T-cell (primary cell): ENCODE measurements at regions of chr17 and their contacts with region 1.

Region 1: DNA sequence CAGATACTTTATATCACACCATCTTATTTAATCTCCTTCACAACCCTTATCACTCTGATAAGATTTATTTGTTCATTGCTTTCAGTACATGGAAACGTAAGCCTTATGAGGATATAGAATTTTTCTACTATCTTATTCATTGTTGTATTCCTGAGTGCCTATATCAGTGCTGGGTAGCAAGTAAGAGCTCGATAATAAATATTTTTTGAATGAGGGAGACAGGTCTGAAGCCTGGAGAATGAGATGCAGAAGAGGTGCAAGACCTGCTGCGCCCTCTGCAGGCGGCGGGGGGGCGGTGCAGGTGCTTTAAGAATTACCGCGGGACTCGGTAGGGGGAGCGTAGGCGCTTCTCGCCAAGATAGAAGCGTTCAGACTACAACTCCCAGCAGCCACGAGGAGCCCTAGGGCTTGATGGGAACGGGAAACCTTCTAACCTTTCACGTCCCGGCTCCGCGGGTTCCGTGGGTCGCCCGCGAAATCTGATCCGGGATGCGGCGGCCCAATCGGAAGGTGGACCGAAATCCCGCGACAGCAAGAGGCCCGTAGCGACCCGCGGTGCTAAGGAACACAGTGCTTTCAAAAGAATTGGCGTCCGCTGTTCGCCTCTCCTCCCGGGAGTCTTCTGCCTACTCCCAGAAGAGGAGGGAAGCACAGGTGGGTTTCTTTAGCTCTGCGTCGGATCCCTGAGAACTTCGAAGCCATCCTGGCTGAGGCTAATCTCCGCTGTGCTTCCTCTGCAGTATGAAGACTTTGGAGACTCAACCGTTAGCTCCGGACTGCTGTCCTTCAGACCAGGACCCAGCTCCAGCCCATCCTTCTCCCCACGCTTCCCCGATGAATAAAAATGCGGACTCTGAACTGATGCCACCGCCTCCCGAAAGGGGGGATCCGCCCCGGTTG is at the start of gene WRAP53:
- DNase-seq: peak; percentile 91 to 97 (median 94)
- ATAC-seq: peak; percentile 78 to 82 (median 81)
- H3K4me3 ChIP-seq: peak within 1 kb of the TSS; percentile 89 to 99
- H3K4me3 Mint-ChIP-seq: peak within 1 kb of the TSS; percentile 85 to 99 (median 96)
- H3K27ac ChIP-seq: peak within 1 kb of the TSS; percentile 98
- H3K27ac Mint-ChIP-seq: peak within 1 kb of the TSS; percentile 100
- H3K4me1 ChIP-seq: peaks cover 17 to 33% of the 10 kb centered on the region in 2 experiments
- H3K4me1 Mint-ChIP-seq: peaks cover 39 to 52% (median 48%) of the 10 kb centered on the region in 3 donors
- H3K27me3 ChIP-seq: no peaks in the 10 kb centered on the region
- H3K27me3 Mint-ChIP-seq: no peaks in the 10 kb centered on the region
- total RNA-seq, gene WRAP53: 8.0 to 14.6 (median 13.1) TPM

Region 2: GRCh38 chr17:6940186-6940649 is 747.9 kb before region 1 on chr17:
- CTCF ChIA-PET with region 1: interaction called in 1 of 2 experiments, 10 read pairs
- POLR2A ChIA-PET with region 1: no interaction called
- DNase-seq: peak in 3 of 35 experiments; percentile 3 to 11 (median 6)
- ATAC-seq: peak in 3 of 4 experiments; percentile 46 to 57 (median 52)
- H3K4me3 ChIP-seq: peak overlapping the region in 1 of 2 donors; percentile 37
- H3K4me3 Mint-ChIP-seq: peak overlapping the region; percentile 45 to 69 (median 57)
- H3K27ac ChIP-seq: no peak overlapping the region
- H3K27ac Mint-ChIP-seq: no peak overlapping the region
- H3K4me1 ChIP-seq: peaks cover 4 to 5% of the 10 kb centered on the region in 2 experiments
- H3K4me1 Mint-ChIP-seq: peaks cover 11 to 15% (median 11%) of the 10 kb centered on the region in 3 donors
- H3K27me3 ChIP-seq: no peaks in the 10 kb centered on the region
- H3K27me3 Mint-ChIP-seq: no peaks in the 10 kb centered on the region

Region 3: GRCh38 chr17:7194056-7194455 is 494.1 kb before region 1 on chr17:
- CTCF ChIA-PET with region 1: no interaction called
- POLR2A ChIA-PET with region 1: no interaction called
- DNase-seq: no peak
- ATAC-seq: no peak
- H3K4me3 ChIP-seq: no peak overlapping the region
- H3K4me3 Mint-ChIP-seq: no peak overlapping the region
- H3K27ac ChIP-seq: no peak overlapping the region
- H3K27ac Mint-ChIP-seq: no peak overlapping the region
- H3K4me1 ChIP-seq: no peaks in the 10 kb centered on the region
- H3K4me1 Mint-ChIP-seq: no peaks in the 10 kb centered on the region
- H3K27me3 ChIP-seq: no peaks in the 10 kb centered on the region
- H3K27me3 Mint-ChIP-seq: no peaks in the 10 kb centered on the region

Region 4: GRCh38 chr17:7435221-7435675 is 252.9 kb before region 1 on chr17 and contains the start of gene TMEM102:
- CTCF ChIA-PET with region 1: interaction called in 1 of 2 experiments, 26 read pairs
- POLR2A ChIA-PET with region 1: interaction called in 1 of 2 experiments, 5 read pairs
- DNase-seq: peak; percentile 95 to 99 (median 97)
- ATAC-seq: peak; percentile 82 to 87 (median 84)
- H3K4me3 ChIP-seq: peak within 1 kb of the TSS; percentile 78 to 86
- H3K4me3 Mint-ChIP-seq: peak within 1 kb of the TSS; percentile 92 to 96 (median 93)
- H3K27ac ChIP-seq: peak within 1 kb of the TSS; percentile 83
- H3K27ac Mint-ChIP-seq: peak within 1 kb of the TSS; percentile 95 to 96
- H3K4me1 ChIP-seq: peaks cover 13 to 51% of the 10 kb centered on the region in 2 experiments
- H3K4me1 Mint-ChIP-seq: peaks cover 35 to 43% (median 37%) of the 10 kb centered on the region in 3 donors
- H3K27me3 ChIP-seq: peaks cover 0 to 28% of the 10 kb centered on the region in 2 experiments
- H3K27me3 Mint-ChIP-seq: peaks cover 11 to 13% of the 10 kb centered on the region in 2 donors
- total RNA-seq, gene TMEM102: 8.8 to 26.9 (median 23.5) TPM

Region 5: DNA sequence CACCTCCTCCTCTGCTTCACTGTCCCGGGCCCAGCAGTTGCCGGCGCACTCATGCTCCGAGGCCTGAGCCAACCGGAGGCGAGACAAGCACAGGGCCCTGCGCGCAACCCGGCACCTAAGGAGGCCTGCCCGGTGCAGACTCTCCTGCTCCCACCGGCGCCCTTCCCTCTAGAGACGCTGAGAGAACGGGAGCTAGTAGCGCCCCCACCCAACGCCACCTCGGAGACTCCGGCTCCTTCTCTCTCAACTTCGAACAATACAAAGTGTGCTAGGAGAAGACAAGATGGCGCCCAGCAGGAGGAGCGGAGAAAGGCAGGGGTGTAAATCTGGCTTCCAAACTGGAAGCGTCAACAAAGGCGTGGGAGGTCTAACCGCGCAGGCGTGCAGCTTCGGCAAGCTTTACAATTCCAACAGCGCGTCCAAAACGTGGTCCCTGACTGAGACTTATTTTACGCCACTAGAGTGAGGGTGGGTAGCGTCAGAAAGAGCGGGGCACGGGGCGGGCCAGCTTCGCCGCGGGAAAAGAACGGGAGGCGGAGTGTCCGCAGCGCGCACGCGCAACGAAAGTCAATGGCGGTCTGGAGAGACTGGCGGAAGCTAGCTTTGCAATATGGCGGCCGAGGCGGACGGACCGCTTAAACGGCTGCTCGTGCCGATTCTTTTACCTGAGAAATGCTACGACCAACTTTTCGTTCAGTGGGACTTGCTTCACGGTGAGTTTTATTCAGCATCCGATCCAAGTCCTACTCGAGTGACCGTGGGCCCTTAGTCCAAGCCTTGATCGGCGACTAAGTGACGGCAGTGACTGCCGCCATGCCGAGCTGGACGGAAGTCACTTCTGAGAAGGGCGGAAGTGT is 104.7 kb before region 1 on chr17 and contains the start of gene MPDU1:
- CTCF ChIA-PET with region 1: interaction called in 1 of 2 experiments, 16 read pairs
- POLR2A ChIA-PET with region 1: interaction called, 7 read pairs
- DNase-seq: peak; percentile 91 to 97 (median 94)
- ATAC-seq: peak; percentile 79 to 87 (median 85)
- H3K4me3 ChIP-seq: peak within 1 kb of the TSS; percentile 79 to 85
- H3K4me3 Mint-ChIP-seq: peak within 1 kb of the TSS; percentile 90 to 99 (median 98)
- H3K27ac ChIP-seq: peak within 1 kb of the TSS; percentile 91
- H3K27ac Mint-ChIP-seq: peak within 1 kb of the TSS; percentile 99 to 100
- H3K4me1 ChIP-seq: peaks cover 27 to 61% of the 10 kb centered on the region in 2 experiments
- H3K4me1 Mint-ChIP-seq: peaks cover 53 to 60% (median 55%) of the 10 kb centered on the region in 3 donors
- H3K27me3 ChIP-seq: no peaks in the 10 kb centered on the region
- H3K27me3 Mint-ChIP-seq: no peaks in the 10 kb centered on the region
- total RNA-seq, gene MPDU1: 27.0 to 31.4 (median 28.6) TPM

Region 6: GRCh38 chr17:7627250-7628121 is 60.7 kb before region 1 on chr17 and contains the start of gene SAT2:
- CTCF ChIA-PET with region 1: interaction called, 5 to 20 read pairs
- POLR2A ChIA-PET with region 1: interaction called, 3 read pairs
- DNase-seq: peak; percentile 70 to 89 (median 79)
- ATAC-seq: peak; percentile 95 to 96 (median 96)
- H3K4me3 ChIP-seq: peak within 1 kb of the TSS; percentile 75 to 87
- H3K4me3 Mint-ChIP-seq: peak within 1 kb of the TSS; percentile 89 to 91 (median 91)
- H3K27ac ChIP-seq: peak within 1 kb of the TSS; percentile 79
- H3K27ac Mint-ChIP-seq: peak within 1 kb of the TSS; percentile 83 to 87
- H3K4me1 ChIP-seq: peaks cover 5 to 20% of the 10 kb centered on the region in 2 experiments
- H3K4me1 Mint-ChIP-seq: peaks cover 14 to 19% (median 18%) of the 10 kb centered on the region in 3 donors
- H3K27me3 ChIP-seq: no peaks in the 10 kb centered on the region
- H3K27me3 Mint-ChIP-seq: no peaks in the 10 kb centered on the region
- total RNA-seq, gene SAT2: 53.2 to 68.8 (median 58.5) TPM

Region 7: GRCh38 chr17:7650509-7651096 is 37.6 kb before region 1 on chr17 and contains the start of gene ATP1B2:
- CTCF ChIA-PET with region 1: interaction called, 5 to 22 read pairs
- POLR2A ChIA-PET with region 1: interaction called in 1 of 2 experiments, 3 read pairs
- DNase-seq: peak; percentile 39 to 85 (median 67)
- ATAC-seq: peak; percentile 90 to 94 (median 94)
- H3K4me3 ChIP-seq: peak within 1 kb of the TSS; percentile 31 to 73
- H3K4me3 Mint-ChIP-seq: peak within 1 kb of the TSS; percentile 79 to 88 (median 79)
- H3K27ac ChIP-seq: no peak within 1 kb of the TSS
- H3K27ac Mint-ChIP-seq: peak within 1 kb of the TSS in 1 of 2 donors; percentile 32
- H3K4me1 ChIP-seq: peaks cover 0 to 23% of the 10 kb centered on the region in 2 experiments
- H3K4me1 Mint-ChIP-seq: peaks cover 12 to 25% (median 18%) of the 10 kb centered on the region in 3 donors
- H3K27me3 ChIP-seq: peaks cover 0 to 72% of the 10 kb centered on the region in 2 experiments
- H3K27me3 Mint-ChIP-seq: peaks cover 20 to 60% of the 10 kb centered on the region in 2 donors
- total RNA-seq, gene ATP1B2: 0.07 to 0.57 (median 0.43) TPM in 4 of 5 donors, not detected in the other

Region 8: DNA sequence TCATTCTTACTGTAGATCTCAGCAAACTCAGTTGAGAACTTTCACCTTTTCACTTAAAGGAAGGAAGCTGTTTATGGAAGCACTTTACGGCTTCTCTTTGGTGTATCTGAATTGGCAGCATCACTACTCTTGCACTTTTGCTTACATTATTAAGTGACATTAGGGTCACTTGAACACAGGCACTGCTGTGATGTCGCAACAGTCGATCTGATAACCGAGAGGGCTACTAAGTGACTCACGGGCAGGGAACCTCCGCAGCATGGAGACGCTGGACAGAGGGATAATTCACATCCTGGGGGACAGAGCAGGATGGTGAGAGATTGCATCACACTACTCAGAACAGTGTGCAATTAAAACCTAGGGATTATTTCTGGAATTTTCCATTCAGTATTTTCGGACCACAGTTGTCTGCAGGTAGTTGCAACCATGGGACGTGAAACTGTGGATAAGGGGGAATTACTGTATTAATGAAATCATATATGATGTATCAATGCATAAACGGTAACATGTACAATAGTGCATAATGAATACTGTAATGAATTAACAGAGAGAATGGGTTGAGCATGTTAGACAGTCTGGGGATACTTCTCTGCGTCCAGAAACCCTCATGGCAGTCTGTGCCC is 86.0 kb after region 1 on chr17:
- CTCF ChIA-PET with region 1: no interaction called
- POLR2A ChIA-PET with region 1: no interaction called
- DNase-seq: no peak
- ATAC-seq: no peak
- H3K4me3 ChIP-seq: no peak overlapping the region
- H3K4me3 Mint-ChIP-seq: no peak overlapping the region
- H3K27ac ChIP-seq: no peak overlapping the region
- H3K27ac Mint-ChIP-seq: no peak overlapping the region
- H3K4me1 ChIP-seq: no peaks in the 10 kb centered on the region
- H3K4me1 Mint-ChIP-seq: no peaks in the 10 kb centered on the region
- H3K27me3 ChIP-seq: peaks cover 0 to 55% of the 10 kb centered on the region in 2 experiments
- H3K27me3 Mint-ChIP-seq: peaks cover 30 to 59% of the 10 kb centered on the region in 2 donors

Region 9: DNA sequence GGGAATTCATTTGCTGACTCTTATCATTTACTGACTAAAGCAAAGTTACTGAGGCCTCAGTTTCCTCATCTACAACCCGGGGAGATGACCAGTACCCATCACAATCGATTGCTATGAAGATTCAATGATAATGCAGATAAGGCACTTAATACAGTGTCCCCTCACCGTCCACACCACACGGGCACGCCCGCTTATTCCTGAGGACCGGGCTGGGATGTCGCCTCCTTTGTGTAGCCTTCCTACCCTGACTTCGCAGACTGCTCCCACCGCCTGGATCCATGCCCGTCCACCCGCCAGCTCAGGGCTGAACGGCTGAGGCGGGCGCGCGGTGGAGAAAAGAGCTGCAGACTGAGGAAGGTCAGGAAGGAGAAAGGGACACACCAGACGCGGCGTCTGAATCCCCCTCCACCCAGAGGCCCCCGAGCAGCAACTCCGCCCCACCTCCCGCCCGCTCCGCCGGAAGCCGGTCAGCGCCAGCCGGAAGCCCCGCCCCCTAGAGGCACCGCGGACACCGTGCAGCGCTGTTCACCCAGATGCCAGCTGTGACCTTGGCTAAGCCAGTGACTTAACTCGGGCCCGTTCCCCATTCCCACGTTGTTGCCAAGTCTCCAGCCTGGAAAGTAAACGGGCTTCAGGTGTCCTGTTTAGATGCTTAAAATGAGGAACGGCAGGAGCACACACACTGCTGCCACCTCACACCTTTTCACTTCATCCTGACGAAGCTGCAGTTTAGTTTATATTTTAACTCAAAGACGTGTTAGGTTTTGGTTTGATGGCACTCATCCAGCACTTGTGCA is 688.3 kb after region 1 on chr17 and contains the start of gene KRABD2:
- CTCF ChIA-PET with region 1: interaction called in 1 of 2 experiments, 10 read pairs
- POLR2A ChIA-PET with region 1: no interaction called
- DNase-seq: peak; percentile 74 to 92 (median 87)
- ATAC-seq: peak; percentile 98 to 100 (median 100)
- H3K4me3 ChIP-seq: peak within 1 kb of the TSS; percentile 74 to 94
- H3K4me3 Mint-ChIP-seq: peak within 1 kb of the TSS; percentile 83 to 89 (median 88)
- H3K27ac ChIP-seq: peak within 1 kb of the TSS; percentile 65
- H3K27ac Mint-ChIP-seq: peak within 1 kb of the TSS; percentile 85 to 86
- H3K4me1 ChIP-seq: peaks cover 29 to 30% of the 10 kb centered on the region in 2 experiments
- H3K4me1 Mint-ChIP-seq: peaks cover 50 to 59% (median 57%) of the 10 kb centered on the region in 3 donors
- H3K27me3 ChIP-seq: no peaks in the 10 kb centered on the region
- H3K27me3 Mint-ChIP-seq: no peaks in the 10 kb centered on the region